ENCODE measurements at regions of chr14 and their contacts with region 1.

Region 1: DNA sequence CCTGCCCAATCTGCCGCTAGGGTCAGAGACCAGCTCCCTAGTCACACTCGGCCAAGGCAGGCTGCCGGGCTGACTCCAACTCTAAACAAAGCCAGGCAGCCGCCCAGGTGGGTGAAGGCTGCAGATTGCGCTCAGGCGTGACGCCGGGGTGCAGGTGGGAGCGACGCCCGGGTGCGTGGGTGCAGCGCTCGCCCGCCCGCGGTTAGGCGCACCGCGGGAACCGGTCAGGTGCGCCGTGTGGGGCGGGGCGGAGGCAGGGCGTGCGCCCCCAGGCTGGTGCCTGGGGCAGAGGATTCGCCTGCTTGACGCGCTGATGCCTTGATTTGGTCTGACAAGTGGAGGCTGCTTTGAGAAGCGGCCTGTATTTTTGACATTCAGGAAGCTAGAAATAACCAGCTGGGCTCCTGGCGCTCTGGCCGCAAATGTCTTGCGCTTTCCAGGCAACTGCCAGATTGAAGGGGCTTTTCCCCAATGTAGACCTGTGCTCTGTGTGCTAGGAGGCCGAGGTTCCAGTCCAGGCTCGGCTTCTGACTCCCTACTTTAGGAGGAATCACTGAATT is 126.7 kb upstream of the HIF1A start:
- DNase-seq: peak in 2 of 4 donors; percentile 63 to 86
- ATAC-seq: peak; percentile 52
- H3K4me3 ChIP-seq: peak overlapping the region in 1 of 2 donors; percentile 22
- H3K27ac ChIP-seq: peak overlapping the region; percentile 40 to 94
- H3K4me1 ChIP-seq: peaks cover 30 to 98% of the 10 kb centered on the region in 2 donors
- H3K27me3 ChIP-seq: no peaks in the 10 kb centered on the region
- CTCF ChIP-seq: no peak

Region 2: GRCh38 chr14:61475316-61475715 is 93.3 kb before region 1 on chr14:
- intact Hi-C with region 1: loop called in 1 of 2 experiments (anchors 10 kb)
- DNase-seq: peak in 1 of 4 donors; percentile 64
- ATAC-seq: peak; percentile 43
- H3K4me3 ChIP-seq: no peak overlapping the region
- H3K27ac ChIP-seq: peak overlapping the region; percentile 95 to 98
- H3K4me1 ChIP-seq: peaks cover 25 to 100% of the 10 kb centered on the region in 2 donors
- H3K27me3 ChIP-seq: no peaks in the 10 kb centered on the region
- CTCF ChIP-seq: peak; percentile 69 to 79

Region 3: GRCh38 chr14:61694830-61695694 is 126.4 kb after region 1 on chr14 and contains the start of gene HIF1A:
- intact Hi-C with region 1: loop called in 1 of 2 experiments (anchors 10 kb)
- DNase-seq: peak; percentile 98 to 100 (median 98)
- ATAC-seq: peak; percentile 93
- H3K4me3 ChIP-seq: peak within 1 kb of the TSS; percentile 85 to 86
- H3K27ac ChIP-seq: peak within 1 kb of the TSS; percentile 99 to 100
- H3K4me1 ChIP-seq: peaks cover 0 to 22% of the 10 kb centered on the region in 2 donors
- H3K27me3 ChIP-seq: no peaks in the 10 kb centered on the region
- CTCF ChIP-seq: no peak
- polyA plus RNA-seq, gene HIF1A: 194 to 231 (median 204) TPM

Measured in left lung (tissue), 14 donors.